ENCODE measurements at regions of chr13 and their contacts with region 1.

Region 1: DNA sequence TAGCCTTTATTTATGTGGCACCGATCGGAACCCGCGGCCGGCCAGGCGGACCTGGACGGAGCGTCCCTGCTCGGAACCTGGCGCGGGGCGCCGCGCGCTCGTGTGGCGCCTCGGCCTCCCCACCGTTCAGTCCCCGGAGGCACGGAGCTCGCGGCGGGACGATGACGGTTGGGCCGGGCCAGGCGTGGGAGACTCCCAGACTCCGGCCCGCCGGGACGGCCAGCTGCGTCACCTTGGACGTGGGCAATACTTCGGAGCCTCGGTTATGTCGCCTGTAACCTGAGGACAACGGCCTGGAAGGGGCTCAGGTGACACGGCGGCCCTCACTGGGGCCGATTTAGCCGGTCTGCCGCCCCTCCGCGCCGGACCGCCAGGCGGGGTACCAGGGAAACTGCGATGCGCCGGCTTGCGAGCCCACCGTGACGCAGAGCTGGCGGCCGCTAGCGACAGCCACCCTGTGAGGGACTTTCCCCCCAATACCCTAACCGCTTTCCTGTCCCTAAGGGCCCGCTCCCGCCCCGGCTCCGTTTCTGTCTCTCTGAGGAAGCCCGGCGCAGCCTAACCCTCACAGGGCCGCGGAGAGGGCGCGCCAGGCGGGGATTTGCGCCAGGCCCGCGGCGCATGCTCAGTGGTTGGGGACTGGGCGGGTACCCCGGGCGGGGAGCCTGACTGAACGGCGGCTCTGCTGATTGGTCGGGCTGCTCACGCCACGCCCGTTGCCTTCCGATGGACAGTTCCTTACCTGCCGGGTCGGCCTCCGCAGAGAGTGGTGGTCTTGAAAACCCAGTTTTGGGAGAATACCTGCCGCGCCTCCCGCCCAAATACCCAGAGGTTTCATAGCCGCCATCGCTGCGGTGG is 109.5 kb upstream of the DOCK9 start:
- DNase-seq: peak; percentile 95
- H3K4me3 ChIP-seq: peak overlapping the region; percentile 71 to 87 (median 85)
- H3K27ac ChIP-seq: peak overlapping the region; percentile 87 to 99 (median 96)
- H3K4me1 ChIP-seq: peaks cover 0 to 30% (median 13%) of the 10 kb centered on the region in 4 donors
- H3K27me3 ChIP-seq: no peaks in the 10 kb centered on the region
- CTCF ChIP-seq: peak in 3 of 4 experiments; percentile 32 to 65 (median 40)
- EP300 ChIP-seq: no peak
- POLR2A ChIP-seq: peak; percentile 86 to 88

Region 2: GRCh38 chr13:98889419-98890085 is 197.8 kb before region 1 on chr13:
- intact Hi-C with region 1: loop called (anchors 10 kb)
- DNase-seq: no peak
- H3K4me3 ChIP-seq: no peak overlapping the region
- H3K27ac ChIP-seq: peak overlapping the region in 1 of 4 donors; percentile 31
- H3K4me1 ChIP-seq: peaks cover 0 to 14% (median 11%) of the 10 kb centered on the region in 4 donors
- H3K27me3 ChIP-seq: no peaks in the 10 kb centered on the region
- CTCF ChIP-seq: no peak
- EP300 ChIP-seq: no peak
- POLR2A ChIP-seq: no peak

Region 3: GRCh38 chr13:98938801-98939200 is 148.5 kb before region 1 on chr13:
- intact Hi-C with region 1: no loop called
- DNase-seq: no peak
- H3K4me3 ChIP-seq: no peak overlapping the region
- H3K27ac ChIP-seq: peak overlapping the region in 3 of 4 donors; percentile 22 to 58 (median 36)
- H3K4me1 ChIP-seq: peaks cover 0 to 31% (median 11%) of the 10 kb centered on the region in 4 donors
- H3K27me3 ChIP-seq: no peaks in the 10 kb centered on the region
- CTCF ChIP-seq: no peak
- EP300 ChIP-seq: no peak
- POLR2A ChIP-seq: no peak

Region 4: GRCh38 chr13:98977568-98978265 is 109.6 kb before region 1 on chr13 and contains the start of gene DOCK9:
- intact Hi-C with region 1: loop called (anchors 5 kb)
- DNase-seq: peak; percentile 76
- H3K4me3 ChIP-seq: peak within 1 kb of the TSS; percentile 18 to 43 (median 40)
- H3K27ac ChIP-seq: peak within 1 kb of the TSS; percentile 55 to 71 (median 63)
- H3K4me1 ChIP-seq: peaks cover 0 to 53% (median 43%) of the 10 kb centered on the region in 4 donors
- H3K27me3 ChIP-seq: no peaks in the 10 kb centered on the region
- CTCF ChIP-seq: no peak
- EP300 ChIP-seq: no peak
- POLR2A ChIP-seq: no peak
- total RNA-seq, gene DOCK9: 60.4 to 126 (median 83.6) TPM

Region 5: DNA sequence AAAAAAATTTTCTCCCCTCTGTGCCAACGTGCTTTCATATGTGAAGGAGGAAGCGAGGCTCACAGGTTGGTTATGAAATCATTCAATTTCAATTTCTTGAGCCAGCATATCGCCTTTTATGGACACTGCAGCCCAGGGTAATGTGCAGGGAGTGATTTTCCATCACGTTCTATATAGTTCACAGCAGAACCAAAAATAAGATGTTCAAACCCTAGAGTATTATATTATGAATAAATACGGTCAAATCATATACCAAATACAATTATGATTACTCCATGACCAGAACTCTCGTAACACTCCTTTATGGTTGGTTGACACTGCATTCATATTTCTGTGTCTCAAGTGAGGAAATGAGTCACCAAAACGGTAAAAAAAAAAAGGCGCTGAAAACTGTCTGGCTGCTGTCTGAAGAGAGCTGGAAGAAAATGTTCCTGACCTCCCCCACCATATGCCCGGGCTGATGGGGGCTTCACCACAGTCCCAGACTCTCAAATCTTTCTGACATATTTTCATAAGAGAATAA is 37.5 kb after region 1 on chr13:
- intact Hi-C with region 1: no loop called
- DNase-seq: no peak
- H3K4me3 ChIP-seq: no peak overlapping the region
- H3K27ac ChIP-seq: no peak overlapping the region
- H3K4me1 ChIP-seq: no peaks in the 10 kb centered on the region
- H3K27me3 ChIP-seq: no peaks in the 10 kb centered on the region
- CTCF ChIP-seq: no peak
- EP300 ChIP-seq: no peak
- POLR2A ChIP-seq: no peak

Region 6: DNA sequence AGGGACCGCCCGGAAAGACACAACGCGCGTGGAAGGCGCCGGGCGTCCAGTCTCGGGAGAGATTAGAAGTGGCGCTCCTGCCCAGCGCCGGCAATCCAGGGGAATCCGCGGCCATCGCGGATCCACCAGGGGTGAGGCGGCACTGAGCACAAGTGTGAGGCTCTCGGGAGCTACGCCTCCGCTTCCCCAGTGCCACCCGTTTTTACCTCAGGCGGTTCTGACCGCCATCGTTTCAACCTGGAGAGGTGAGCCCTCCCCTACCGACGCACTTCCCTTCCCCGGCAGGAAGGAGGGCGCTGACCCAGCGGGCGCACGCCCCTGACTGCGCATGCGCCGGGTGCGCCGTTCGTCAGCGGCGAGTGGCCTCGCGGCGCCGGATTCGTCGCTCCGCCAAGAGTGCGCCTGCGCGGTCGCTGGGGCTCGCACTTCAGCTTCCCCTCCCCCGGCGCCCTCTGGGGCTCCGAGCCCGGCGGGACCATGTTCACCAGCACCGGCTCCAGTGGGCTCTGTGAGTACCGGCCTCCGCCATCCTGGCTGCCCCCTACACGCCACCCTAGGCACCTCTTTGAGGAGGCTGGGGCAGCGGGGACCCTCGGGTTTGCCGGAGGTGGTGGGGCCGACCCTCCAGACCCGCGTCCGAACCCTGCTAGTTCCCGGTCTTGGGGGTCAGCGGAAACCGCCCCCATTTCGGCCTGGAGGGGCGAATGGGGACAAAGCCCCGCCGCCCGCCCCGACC is 113.3 kb after region 1 on chr13 and contains the start of gene UBAC2:
- intact Hi-C with region 1: loop called (anchors 5 kb)
- DNase-seq: peak; percentile 97
- H3K4me3 ChIP-seq: peak within 1 kb of the TSS; percentile 67 to 92 (median 88)
- H3K27ac ChIP-seq: peak within 1 kb of the TSS; percentile 90 to 97 (median 96)
- H3K4me1 ChIP-seq: peaks cover 0 to 34% (median 10%) of the 10 kb centered on the region in 4 donors
- H3K27me3 ChIP-seq: no peaks in the 10 kb centered on the region
- CTCF ChIP-seq: peak in 2 of 4 experiments; percentile 6 to 15
- EP300 ChIP-seq: no peak
- POLR2A ChIP-seq: peak; percentile 87 to 88
- total RNA-seq, gene UBAC2: 47.4 to 54.6 (median 49.2) TPM

Region 7: GRCh38 chr13:99269627-99270241 is 182.4 kb after region 1 on chr13:
- intact Hi-C with region 1: no loop called
- DNase-seq: no peak
- H3K4me3 ChIP-seq: no peak overlapping the region
- H3K27ac ChIP-seq: peak overlapping the region in 1 of 4 donors; percentile 22
- H3K4me1 ChIP-seq: no peaks in the 10 kb centered on the region
- H3K27me3 ChIP-seq: no peaks in the 10 kb centered on the region
- CTCF ChIP-seq: peak in 3 of 4 experiments; percentile 24 to 54 (median 27)
- EP300 ChIP-seq: no peak
- POLR2A ChIP-seq: no peak